Prostate gland (tissue), 2 donors: ENCODE measurements at regions of chr6 and their contacts with region 1.

Region 1: GRCh38 chr6:32838114-32838958 is at the start of gene TAP2:
- DNase-seq: peak; percentile 94
- H3K4me3 ChIP-seq: peak within 1 kb of the TSS; percentile 61 to 81
- H3K27ac ChIP-seq: peak within 1 kb of the TSS; percentile 94 to 96
- H3K4me1 ChIP-seq: peaks cover 2% of the 10 kb centered on the region
- H3K27me3 ChIP-seq: no peaks in the 10 kb centered on the region
- CTCF ChIP-seq: peak; percentile 85 to 99 (median 98)
- POLR2A ChIP-seq: peak; percentile 75
- total RNA-seq, gene TAP2: 7.1 to 15.8 TPM

Region 2: GRCh38 chr6:32627831-32628230 is 210.5 kb before region 1 on chr6:
- intact Hi-C with region 1: no loop called
- DNase-seq: no peak
- H3K4me3 ChIP-seq: no peak overlapping the region
- H3K27ac ChIP-seq: no peak overlapping the region
- H3K4me1 ChIP-seq: no peaks in the 10 kb centered on the region
- H3K27me3 ChIP-seq: no peaks in the 10 kb centered on the region
- CTCF ChIP-seq: no peak
- POLR2A ChIP-seq: no peak

Region 3: GRCh38 chr6:32853541-32854375 is 15.4 kb after region 1 on chr6 and contains the starts of genes PSMB9 and TAP1:
- intact Hi-C with region 1: loop called (anchors 1 kb)
- DNase-seq: peak; percentile 96
- H3K4me3 ChIP-seq: peak within 1 kb of the TSS; percentile 89 to 97
- H3K27ac ChIP-seq: peak within 1 kb of the TSS; percentile 99
- H3K4me1 ChIP-seq: peaks cover 10% of the 10 kb centered on the region
- H3K27me3 ChIP-seq: no peaks in the 10 kb centered on the region
- CTCF ChIP-seq: peak; percentile 87 to 99 (median 92)
- POLR2A ChIP-seq: peak; percentile 98
- total RNA-seq, gene PSMB9: 22.4 to 27.7 TPM
- total RNA-seq, gene TAP1: 30.6 to 47.4 TPM

Region 4: DNA sequence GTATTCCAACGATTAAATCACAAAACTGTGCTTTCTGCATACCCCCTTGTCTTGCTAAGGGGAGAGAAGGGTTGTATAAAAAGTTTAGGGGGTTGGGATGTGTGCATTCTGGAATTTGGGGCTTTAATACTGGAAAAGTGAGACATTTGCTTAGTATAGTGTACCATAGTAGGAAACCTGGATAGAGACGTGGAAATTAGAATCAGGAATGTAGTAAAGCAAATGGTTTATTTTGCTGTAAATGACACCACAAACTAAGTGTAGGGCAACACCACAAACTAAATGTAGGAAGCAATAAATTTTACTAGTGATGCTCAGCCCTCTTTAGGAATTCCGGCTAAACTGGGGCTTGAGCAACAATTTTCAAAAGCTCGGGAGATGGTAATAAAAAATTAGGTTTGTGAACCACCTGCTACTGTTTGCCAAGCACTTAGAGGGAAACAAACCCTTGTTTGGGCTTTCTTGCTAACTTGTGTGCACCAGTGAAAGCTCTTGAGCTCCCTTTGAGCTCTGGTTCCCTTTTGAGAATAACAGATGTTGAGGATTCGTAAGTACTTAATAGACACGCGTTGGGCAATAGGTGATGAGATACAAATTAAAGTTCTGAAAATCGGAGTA is 143.9 kb after region 1 on chr6:
- intact Hi-C with region 1: no loop called
- DNase-seq: no peak
- H3K4me3 ChIP-seq: no peak overlapping the region
- H3K27ac ChIP-seq: no peak overlapping the region
- H3K4me1 ChIP-seq: peaks cover 22% of the 10 kb centered on the region
- H3K27me3 ChIP-seq: no peaks in the 10 kb centered on the region
- CTCF ChIP-seq: no peak
- POLR2A ChIP-seq: no peak

Region 5: GRCh38 chr6:33049323-33050013 is 211.1 kb after region 1 on chr6:
- intact Hi-C with region 1: no loop called
- DNase-seq: no peak
- H3K4me3 ChIP-seq: no peak overlapping the region
- H3K27ac ChIP-seq: no peak overlapping the region
- H3K4me1 ChIP-seq: no peaks in the 10 kb centered on the region
- H3K27me3 ChIP-seq: no peaks in the 10 kb centered on the region
- CTCF ChIP-seq: no peak
- POLR2A ChIP-seq: no peak